HepG2 (cell line): ENCODE measurements at regions of chr12 and their contacts with region 1.

Region 1: DNA sequence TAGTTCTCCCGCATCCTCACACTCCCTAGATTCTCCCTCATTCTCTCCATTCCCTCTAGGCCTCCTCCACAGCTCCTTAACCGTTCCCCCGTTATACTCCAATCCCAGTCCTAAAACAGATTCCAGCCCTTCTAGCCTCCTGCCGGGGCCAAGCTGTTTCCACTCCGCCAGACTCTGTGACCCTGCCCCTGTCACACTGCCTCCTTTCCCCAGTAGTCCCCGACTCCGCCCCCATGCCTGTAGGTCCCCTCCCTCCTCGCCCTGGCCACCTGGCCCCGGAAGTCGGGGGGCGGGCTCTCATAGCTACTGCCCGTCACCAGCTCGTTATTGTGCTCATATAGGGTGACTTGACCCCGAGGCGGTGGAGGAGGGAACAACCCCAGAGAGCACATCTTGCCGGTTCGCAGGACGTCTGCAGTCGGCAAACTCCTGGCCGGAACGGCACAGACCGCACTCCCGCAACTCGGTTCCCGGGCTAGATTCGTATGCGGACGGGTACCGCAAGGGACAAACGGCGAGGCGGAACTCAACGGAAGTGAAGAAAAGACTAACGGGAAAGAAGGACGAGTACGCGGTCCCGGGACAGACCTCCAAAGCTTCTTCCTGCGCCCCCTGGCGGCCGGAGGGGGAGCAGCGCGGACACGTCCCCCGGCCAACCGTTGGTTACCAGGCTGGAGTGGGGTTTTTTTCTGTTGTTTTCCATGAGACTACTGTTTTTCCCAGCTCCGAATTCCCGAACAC is at the start of gene AAAS:
- DNase-seq: peak; percentile 93
- ATAC-seq: peak; percentile 89
- H3K4me3 ChIP-seq: peak within 1 kb of the TSS; percentile 64 to 82 (median 67)
- H3K27ac ChIP-seq: peak within 1 kb of the TSS; percentile 92
- H3K4me1 ChIP-seq: peaks cover 45% of the 10 kb centered on the region
- H3K27me3 ChIP-seq: no peaks in the 10 kb centered on the region
- CTCF ChIP-seq: peak; percentile 96
- EP300 ChIP-seq: peak in 1 of 2 experiments; percentile 41; a peak in 1 of 4 replicates
- POLR2A ChIP-seq: peak; percentile 84 to 95
- RAD21 ChIP-seq: peak; percentile 64; the same call in 1 of the 2 replicates
- total RNA-seq, gene AAAS: 47.6 and 49.9 TPM in 2 replicates

Region 2: DNA sequence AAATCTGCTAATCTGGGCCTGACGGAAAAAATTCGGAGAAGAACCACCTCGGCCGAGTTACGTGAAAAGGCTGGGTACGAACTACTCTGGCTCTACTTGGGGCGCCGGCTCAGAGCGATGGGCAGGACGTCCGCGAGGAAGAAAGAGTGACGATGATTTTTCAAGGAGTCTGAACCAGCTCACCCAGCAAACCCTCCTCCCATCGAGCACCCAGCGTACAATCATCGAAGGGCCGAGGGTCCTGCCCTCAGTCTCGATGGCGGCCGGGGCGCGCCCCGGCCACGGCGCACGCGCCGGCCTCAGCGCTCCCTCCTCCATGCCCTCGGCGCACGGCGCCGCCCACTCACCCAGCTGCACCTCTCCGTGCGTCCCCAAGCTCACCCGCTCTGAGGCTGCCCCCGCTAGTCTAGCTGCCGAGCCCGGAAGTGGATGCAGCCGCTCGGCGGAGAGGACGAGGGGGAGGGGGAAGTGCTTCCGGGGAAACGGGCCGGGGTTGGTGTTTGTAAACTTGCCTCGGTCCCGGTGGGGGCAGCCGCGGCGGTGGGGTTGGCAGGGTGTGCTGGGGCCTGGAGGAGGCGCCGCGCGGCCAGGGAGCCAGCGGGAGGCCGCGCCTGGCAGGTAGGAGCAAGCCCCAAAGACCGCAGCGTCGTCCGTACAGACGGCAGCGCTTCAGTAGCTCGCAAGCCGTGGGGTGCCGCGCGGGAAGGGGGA is 140.9 kb before region 1 on chr12 and contains the starts of genes CSAD and ZNF740:
- CTCF ChIA-PET with region 1: no interaction called
- POLR2A ChIA-PET with region 1: interaction called, 18 read pairs
- in situ Hi-C with region 1: no loop called
- intact Hi-C with region 1: no loop called
- DNase-seq: peak; percentile 95
- ATAC-seq: peak; percentile 98
- H3K4me3 ChIP-seq: peak within 1 kb of the TSS; percentile 64 to 93 (median 82)
- H3K27ac ChIP-seq: peak within 1 kb of the TSS; percentile 91
- H3K4me1 ChIP-seq: peaks cover 56% of the 10 kb centered on the region
- H3K27me3 ChIP-seq: no peaks in the 10 kb centered on the region; a peak in 1 of 5 replicates
- CTCF ChIP-seq: no peak; the same call in 1 of the 2 replicates
- EP300 ChIP-seq: no peak
- POLR2A ChIP-seq: peak; percentile 75 to 88
- RAD21 ChIP-seq: no peak
- total RNA-seq, gene CSAD: 2.7 and 7.2 TPM in 2 replicates
- total RNA-seq, gene ZNF740: 15.0 and 16.9 TPM in 2 replicates

Region 3: DNA sequence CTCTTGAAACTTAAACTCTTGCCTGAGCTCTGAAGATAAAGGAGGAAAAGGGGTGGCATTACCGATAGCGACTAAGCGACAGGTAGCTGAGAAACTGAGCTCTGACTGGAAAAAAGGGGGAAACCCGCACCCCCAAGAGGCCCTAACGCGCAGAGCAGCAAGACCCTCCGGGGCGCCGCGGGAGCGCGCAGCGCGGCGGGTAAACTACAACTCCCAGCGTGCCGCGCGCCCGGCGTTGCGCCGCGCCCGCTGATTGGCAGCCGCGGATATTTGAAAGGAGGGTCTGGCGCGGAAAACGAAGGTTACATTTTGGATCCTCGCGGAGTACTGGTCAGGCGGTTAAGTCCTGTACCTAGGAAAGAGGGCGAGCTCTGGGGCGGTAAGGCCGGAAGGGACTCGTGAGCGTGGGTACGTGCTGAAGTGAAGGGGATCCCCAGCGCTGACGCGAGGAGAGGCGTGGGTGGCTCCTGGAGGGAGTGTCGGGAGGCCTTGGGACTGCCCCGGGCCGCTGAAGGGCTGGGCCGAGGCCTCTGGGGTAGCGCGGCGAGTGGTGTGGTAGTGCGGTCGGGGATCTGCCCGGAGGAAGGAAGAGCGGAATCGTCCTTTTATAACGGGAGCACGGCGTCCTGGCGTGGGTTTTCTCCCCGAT is 53.1 kb before region 1 on chr12 and contains the start of gene ESPL1:
- CTCF ChIA-PET with region 1: no interaction called
- POLR2A ChIA-PET with region 1: interaction called, 12 read pairs
- in situ Hi-C with region 1: no loop called
- intact Hi-C with region 1: no loop called
- DNase-seq: peak; percentile 65
- ATAC-seq: peak; percentile 91
- H3K4me3 ChIP-seq: peak within 1 kb of the TSS; percentile 77 to 96 (median 91)
- H3K27ac ChIP-seq: peak within 1 kb of the TSS; percentile 32
- H3K4me1 ChIP-seq: peaks cover 28% of the 10 kb centered on the region
- H3K27me3 ChIP-seq: no peaks in the 10 kb centered on the region
- CTCF ChIP-seq: peak; percentile 77
- EP300 ChIP-seq: no peak
- POLR2A ChIP-seq: no peak
- RAD21 ChIP-seq: peak; percentile 57
- total RNA-seq, gene ESPL1: 11.5 and 11.6 TPM in 2 replicates

Region 4: GRCh38 chr12:53333289-53333688 is 12.0 kb after region 1 on chr12:
- CTCF ChIA-PET with region 1: no interaction called
- POLR2A ChIA-PET with region 1: interaction called, 12 read pairs
- in situ Hi-C with region 1: no loop called
- intact Hi-C with region 1: no loop called
- DNase-seq: no peak
- ATAC-seq: no peak
- H3K4me3 ChIP-seq: no peak overlapping the region
- H3K27ac ChIP-seq: no peak overlapping the region
- H3K4me1 ChIP-seq: no peaks in the 10 kb centered on the region; the same call in 1 of the 2 replicates
- H3K27me3 ChIP-seq: peaks cover 14 to 76% of the 10 kb centered on the region in 2 experiments
- CTCF ChIP-seq: no peak
- EP300 ChIP-seq: no peak
- POLR2A ChIP-seq: no peak
- RAD21 ChIP-seq: no peak

Region 5: DNA sequence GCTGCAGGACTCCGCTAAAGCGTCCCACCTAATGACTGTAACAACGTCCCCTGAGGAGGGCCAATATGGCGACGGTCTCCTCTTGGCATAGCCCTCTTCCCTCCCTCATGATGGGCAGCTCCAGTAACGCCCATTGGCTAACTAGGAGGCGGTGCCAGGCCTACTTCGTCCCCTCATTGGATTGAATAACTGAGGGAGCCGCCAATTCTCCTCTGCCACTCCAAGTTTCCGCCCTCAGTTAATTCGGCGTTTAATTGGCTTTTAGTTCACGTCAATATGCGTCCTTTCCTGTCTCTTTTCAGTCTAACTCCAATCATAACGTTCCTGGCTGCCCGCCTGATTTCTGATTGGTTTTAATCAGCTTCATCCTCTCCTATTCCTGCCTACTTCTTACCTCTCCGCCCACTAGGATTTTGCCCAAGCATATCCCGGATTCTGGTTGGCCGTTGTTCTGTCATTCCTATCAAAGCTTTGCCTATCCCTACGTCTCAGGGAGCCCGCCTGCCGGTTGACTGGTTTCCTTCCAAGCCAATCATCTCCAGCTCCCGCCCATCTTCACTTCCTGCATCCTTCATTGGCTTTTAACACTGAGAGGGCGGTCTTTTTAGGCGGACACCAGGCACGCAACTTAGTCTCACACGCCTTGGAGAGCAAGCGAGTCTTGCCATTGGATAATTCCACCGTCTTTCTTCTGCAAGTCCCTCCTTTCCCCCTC is 58.3 kb after region 1 on chr12:
- CTCF ChIA-PET with region 1: no interaction called
- POLR2A ChIA-PET with region 1: interaction called, 18 read pairs
- in situ Hi-C with region 1: no loop called
- intact Hi-C with region 1: no loop called
- DNase-seq: peak; percentile 100
- ATAC-seq: peak; percentile 94
- H3K4me3 ChIP-seq: peak overlapping the region in 2 of 3 experiments; percentile 73 to 87; a peak in 2 of 6 replicates
- H3K27ac ChIP-seq: peak overlapping the region; percentile 79
- H3K4me1 ChIP-seq: peaks cover 47% of the 10 kb centered on the region
- H3K27me3 ChIP-seq: no peaks in the 10 kb centered on the region; a peak in 1 of 5 replicates
- CTCF ChIP-seq: no peak
- EP300 ChIP-seq: no peak
- POLR2A ChIP-seq: peak in 1 of 2 experiments; percentile 45; a peak in 2 of 4 replicates
- RAD21 ChIP-seq: no peak

Region 6: DNA sequence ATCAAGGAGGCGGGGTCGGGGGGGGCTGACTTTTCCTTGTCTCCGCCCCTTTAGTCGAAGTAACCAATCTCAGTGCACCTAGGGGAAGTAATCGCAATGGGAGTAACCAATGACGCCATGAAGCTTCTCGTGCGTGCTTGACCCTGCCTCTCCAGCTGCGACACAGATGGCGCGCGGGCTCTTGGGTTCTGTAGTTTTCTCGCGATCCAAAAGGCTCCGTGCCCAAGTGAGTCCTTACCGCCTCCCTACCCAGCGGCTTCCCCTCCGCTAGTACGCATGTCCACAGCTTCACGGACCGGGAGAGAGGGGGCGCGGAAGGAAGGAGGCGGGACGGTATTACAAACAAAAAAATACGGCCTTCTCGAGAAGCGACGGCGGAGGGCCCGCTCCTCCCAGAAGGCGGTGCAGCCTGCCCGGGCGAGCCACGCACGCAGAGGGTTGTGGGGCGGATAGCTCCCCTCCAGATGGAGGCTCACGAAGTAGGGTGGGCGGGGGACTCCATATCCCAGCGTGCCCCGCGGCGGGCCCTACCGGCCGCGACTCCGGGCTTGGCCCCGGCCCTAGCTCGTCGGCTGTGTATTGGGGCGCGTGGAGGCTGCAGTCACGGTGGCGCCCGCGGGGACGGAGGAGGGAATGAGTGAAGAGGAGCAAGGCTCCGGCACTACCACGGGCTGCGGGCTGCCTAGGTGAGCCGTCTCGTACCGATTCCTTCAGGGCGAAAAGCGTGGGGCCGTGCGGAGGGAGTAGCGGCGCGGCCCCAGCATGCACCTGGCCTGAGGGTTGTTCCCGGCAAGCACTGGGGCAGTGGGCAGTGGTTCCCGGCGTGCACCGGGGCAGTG is 179.8 kb after region 1 on chr12 and contains the start of gene TARBP2:
- CTCF ChIA-PET with region 1: no interaction called
- POLR2A ChIA-PET with region 1: interaction called, 51 read pairs
- in situ Hi-C with region 1: loop called (anchors 5 kb)
- intact Hi-C with region 1: loop called (anchors 2 kb)
- DNase-seq: peak; percentile 99
- ATAC-seq: peak; percentile 83
- H3K4me3 ChIP-seq: peak within 1 kb of the TSS; percentile 69 to 78 (median 76)
- H3K27ac ChIP-seq: peak within 1 kb of the TSS; percentile 88
- H3K4me1 ChIP-seq: peaks cover 48% of the 10 kb centered on the region
- H3K27me3 ChIP-seq: no peaks in the 10 kb centered on the region; a peak in 1 of 5 replicates
- CTCF ChIP-seq: peak; percentile 11; the same call in 1 of the 2 replicates
- EP300 ChIP-seq: 0 out of 4 replicates have a peak, but pooled peaks of 1 of the 2 experiments have one; percentile 5
- POLR2A ChIP-seq: peak; percentile 78 to 86
- RAD21 ChIP-seq: peak; percentile 38; the same call in 1 of the 2 replicates
- total RNA-seq, gene TARBP2: 39.5 and 55.5 TPM in 2 replicates